ENCODE measurements at regions of chrX and their contacts with region 1.

Region 1: GRCh38 chrX:20294957-20295356 is 28.2 kb upstream of the RPS6KA3 start:
- DNase-seq: no peak
- ATAC-seq: no peak
- H3K4me3 ChIP-seq: no peak overlapping the region
- H3K27ac ChIP-seq: no peak overlapping the region
- H3K4me1 ChIP-seq: no peaks in the 10 kb centered on the region
- H3K27me3 ChIP-seq: no peaks in the 10 kb centered on the region
- CTCF ChIP-seq: no peak

Region 2: DNA sequence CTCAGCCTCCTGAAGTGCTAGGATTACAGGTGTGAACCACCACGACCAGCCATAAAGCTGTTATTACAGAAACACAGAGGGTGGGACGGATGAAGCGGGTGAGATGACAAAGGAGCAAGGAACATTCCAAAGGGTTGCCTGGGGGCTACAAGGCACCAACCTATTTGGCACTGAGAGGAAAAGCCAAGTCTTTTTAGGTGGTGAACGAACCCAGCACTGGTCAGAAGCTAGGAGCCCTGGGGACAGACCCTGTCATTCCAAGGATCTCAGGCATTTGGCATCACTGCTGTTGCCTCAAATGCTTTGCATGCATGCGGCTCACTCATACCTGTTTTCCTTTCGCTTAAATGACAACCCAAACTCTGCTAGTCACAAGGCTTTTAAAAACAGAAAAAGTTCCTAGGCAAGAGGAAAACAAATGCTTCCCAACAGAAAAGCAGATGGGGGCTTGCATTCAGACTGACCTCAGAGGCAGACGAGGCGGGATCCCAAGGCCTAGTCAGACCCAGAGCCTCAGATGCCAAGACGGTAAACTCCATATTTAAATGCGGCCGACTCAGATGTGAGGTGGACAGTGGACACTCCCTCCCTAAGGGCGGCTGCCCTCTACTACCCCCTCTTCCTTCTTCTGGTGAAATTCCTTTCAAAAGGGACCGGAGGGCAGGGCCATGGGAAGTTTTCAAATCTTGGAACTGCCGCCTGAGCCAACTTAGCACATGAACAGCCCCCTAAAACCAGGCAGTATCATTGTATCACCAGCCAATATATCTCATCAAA is 182.7 kb before region 1 on chrX:
- CTCF ChIA-PET with region 1: no interaction called
- POLR2A ChIA-PET with region 1: no interaction called
- in situ Hi-C with region 1: no loop called
- intact Hi-C with region 1: no loop called
- DNase-seq: no peak
- ATAC-seq: no peak
- H3K4me3 ChIP-seq: no peak overlapping the region
- H3K27ac ChIP-seq: no peak overlapping the region
- H3K4me1 ChIP-seq: no peaks in the 10 kb centered on the region
- H3K27me3 ChIP-seq: no peaks in the 10 kb centered on the region
- CTCF ChIP-seq: no peak

Region 3: DNA sequence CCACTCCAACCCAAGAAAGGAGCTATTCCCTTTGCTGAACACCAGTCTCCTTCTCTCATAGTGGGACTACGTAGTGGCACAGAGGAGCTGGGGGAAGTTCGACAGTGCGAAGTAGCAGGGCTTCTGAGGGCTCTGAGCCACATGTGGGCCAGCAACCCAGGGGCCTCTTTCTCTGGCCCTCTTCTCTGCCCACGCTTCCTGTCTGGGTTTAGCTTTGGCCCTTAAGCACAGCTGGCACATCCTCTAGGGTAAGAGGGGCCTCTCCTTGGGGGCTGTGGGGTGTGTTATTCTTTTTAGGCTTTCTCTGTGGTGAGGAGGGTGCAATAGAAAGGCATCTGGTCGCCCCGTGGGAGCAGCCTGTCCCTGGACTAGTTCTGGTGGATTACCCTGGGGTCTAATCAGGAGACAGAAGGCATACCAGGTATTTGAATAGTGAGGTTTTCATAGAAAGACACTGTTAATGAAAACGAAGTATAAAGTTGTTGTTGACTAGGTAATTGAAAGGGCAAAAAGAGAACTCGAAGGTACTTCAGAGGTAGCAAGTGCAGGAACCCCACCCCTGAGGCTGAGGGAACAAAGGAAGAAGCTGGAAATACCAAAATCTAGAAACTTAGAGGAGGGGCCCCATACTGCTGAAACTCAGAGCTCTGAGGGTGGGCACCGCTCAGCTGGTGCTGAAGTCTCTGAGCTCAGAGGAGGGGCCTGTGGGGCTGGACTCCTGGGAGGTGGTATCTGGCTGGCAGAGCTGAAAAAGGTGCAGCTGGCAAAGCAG is 123.6 kb after region 1 on chrX:
- CTCF ChIA-PET with region 1: no interaction called
- POLR2A ChIA-PET with region 1: no interaction called
- in situ Hi-C with region 1: no loop called
- intact Hi-C with region 1: no loop called
- DNase-seq: no peak
- ATAC-seq: no peak
- H3K4me3 ChIP-seq: no peak overlapping the region
- H3K27ac ChIP-seq: no peak overlapping the region
- H3K4me1 ChIP-seq: no peaks in the 10 kb centered on the region
- H3K27me3 ChIP-seq: no peaks in the 10 kb centered on the region
- CTCF ChIP-seq: no peak

Region 4: GRCh38 chrX:20442597-20442996 is 147.6 kb after region 1 on chrX:
- CTCF ChIA-PET with region 1: no interaction called
- POLR2A ChIA-PET with region 1: no interaction called
- in situ Hi-C with region 1: no loop called
- intact Hi-C with region 1: loop called (anchors 5 kb)
- DNase-seq: peak; percentile 32
- ATAC-seq: peak; percentile 70; the same call in 1 of the 2 replicates
- H3K4me3 ChIP-seq: no peak overlapping the region
- H3K27ac ChIP-seq: no peak overlapping the region
- H3K4me1 ChIP-seq: no peaks in the 10 kb centered on the region
- H3K27me3 ChIP-seq: no peaks in the 10 kb centered on the region
- CTCF ChIP-seq: peak; percentile 74

Measured in Panc1 (cell line).